ENCODE measurements at regions of chr16 and their contacts with region 1.

Region 1: DNA sequence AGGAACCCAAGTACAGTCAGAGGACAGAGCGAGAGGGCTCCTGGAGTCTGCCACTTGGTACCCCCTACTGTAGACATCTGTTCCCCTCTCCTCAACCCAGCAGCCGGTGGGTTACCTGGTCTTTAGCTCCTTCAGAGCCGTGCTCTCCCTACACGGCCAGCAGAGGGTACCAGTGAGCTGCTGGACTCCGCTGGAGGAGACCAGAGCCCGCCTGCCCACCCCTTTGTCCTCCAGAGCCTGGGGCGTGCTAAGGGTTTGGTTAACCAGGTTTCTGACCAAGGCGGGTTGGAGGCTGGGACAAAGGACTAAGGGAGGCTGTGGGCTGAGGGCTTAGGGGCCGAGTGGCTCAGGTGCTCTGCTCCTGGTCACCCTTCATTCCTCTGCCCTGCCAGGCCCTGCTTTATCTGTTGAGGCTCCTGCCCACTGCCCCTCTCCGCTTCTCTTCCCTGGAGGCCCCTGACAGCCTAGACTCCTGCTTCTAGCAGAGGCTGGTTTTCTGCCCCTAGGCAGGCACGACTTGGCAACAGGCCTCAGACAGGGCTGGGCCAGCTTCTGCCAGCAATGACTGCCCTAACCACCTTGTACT is 2.7 kb upstream of the HSD11B2 start:
- DNase-seq: peak; percentile 25 to 84 (median 58)

Region 2: DNA sequence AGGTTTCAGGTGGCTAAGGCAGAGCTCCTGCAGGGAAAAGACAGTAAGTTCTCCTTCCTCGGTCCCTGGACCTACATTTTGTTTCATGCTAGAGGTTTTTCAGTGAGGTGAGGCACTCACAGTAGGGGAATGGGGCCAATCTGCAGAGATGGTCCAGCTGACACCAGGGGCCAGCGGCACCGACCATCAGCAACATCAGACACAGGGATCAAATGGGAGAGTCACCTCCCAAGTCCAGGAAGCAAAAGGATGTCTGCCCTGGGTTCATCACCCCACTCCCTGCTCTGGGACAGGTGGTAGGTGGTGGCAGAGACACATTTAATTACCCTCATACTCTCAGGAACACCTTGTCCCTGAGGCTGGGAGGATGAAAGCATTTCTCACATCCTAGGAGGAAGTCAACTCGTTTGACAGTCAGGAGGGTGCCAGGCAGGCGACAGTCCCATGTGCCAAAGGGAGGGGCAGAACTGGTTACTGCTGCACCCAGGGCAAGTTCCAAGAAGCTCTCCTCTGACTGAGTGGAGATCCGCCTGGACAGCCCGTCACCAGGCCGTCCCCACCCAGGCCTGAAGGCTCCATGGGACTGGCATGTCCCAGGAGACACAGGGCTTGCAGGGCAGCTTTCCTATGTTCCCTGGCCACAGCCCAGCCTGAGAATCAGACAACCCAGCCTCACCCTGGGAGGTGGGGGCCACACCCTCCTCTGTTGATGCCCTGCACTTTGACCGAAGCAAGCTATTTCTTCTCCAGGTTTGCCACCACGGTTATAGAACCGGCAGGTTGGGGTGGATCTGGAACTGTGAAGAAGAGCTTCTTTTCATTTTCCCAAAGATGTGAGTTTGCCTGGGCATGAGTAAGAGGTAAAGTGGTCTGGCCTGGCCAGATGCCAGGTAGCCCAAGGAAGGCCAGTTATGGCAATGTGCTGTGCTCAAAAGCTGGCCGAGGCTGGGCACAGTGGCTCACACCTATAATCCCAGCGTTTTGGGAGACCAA is 33.7 kb after region 1 on chr16:
- intact Hi-C with region 1: loop called (anchors 5 kb)
- DNase-seq: peak in 38 of 42 donors; percentile 28 to 84 (median 66)